ENCODE measurements at regions of chr20 and their contacts with region 1.

Region 1: GRCh38 chr20:36861875-36862801 is 13.8 kb upstream of the TLDC2 start:
- DNase-seq: no peak
- ATAC-seq: no peak
- H3K4me3 Mint-ChIP-seq: peak overlapping the region; percentile 78
- H3K27ac Mint-ChIP-seq: peak overlapping the region; percentile 35
- H3K4me1 Mint-ChIP-seq: peaks cover 76% of the 10 kb centered on the region
- H3K27me3 Mint-ChIP-seq: no peaks in the 10 kb centered on the region
- CTCF ChIP-seq: no peak

Region 2: GRCh38 chr20:36613974-36614373 is 248.2 kb before region 1 on chr20:
- CTCF ChIA-PET with region 1: interaction called, 6 read pairs
- POLR2A ChIA-PET with region 1: no interaction called
- intact Hi-C with region 1: loop called (anchors 2 kb)
- DNase-seq: no peak
- ATAC-seq: no peak
- H3K4me3 Mint-ChIP-seq: no peak overlapping the region
- H3K27ac Mint-ChIP-seq: no peak overlapping the region
- H3K4me1 Mint-ChIP-seq: no peaks in the 10 kb centered on the region
- H3K27me3 Mint-ChIP-seq: no peaks in the 10 kb centered on the region
- CTCF ChIP-seq: no peak

Region 3: DNA sequence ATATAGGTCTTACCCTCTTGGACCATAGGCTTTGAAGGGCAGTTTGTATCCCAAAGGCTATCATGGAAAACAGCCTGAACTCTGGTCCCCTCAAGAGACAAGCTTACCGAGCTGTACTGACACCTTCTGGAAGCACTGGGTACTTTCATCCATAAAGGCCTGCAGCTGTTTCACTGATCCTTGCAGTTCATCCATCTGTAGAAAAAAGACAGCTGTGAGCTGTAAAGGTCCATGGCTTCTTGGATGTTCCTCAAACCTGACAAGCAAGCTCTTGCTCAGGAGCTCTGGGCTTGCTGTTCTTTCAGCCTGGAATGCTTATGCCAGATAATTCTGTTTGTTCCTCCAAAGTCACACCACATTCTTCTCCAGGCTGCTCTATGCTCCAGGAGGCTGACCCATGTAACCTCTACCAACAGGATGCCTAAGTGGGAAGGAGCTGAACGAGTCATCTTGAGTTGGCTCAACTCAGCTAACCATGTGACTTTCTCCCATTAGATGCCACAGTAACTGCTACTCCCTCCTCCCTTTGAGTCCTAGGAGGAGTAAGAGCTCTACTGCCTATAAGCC is 107.4 kb before region 1 on chr20:
- CTCF ChIA-PET with region 1: interaction called, 13 read pairs
- POLR2A ChIA-PET with region 1: no interaction called
- intact Hi-C with region 1: no loop called
- DNase-seq: no peak
- ATAC-seq: peak; percentile 60
- H3K4me3 Mint-ChIP-seq: no peak overlapping the region
- H3K27ac Mint-ChIP-seq: peak overlapping the region; percentile 61
- H3K4me1 Mint-ChIP-seq: peaks cover 33% of the 10 kb centered on the region
- H3K27me3 Mint-ChIP-seq: no peaks in the 10 kb centered on the region
- CTCF ChIP-seq: no peak

Region 4: GRCh38 chr20:36792422-36792821 is 69.7 kb before region 1 on chr20:
- CTCF ChIA-PET with region 1: interaction called, 14 read pairs
- POLR2A ChIA-PET with region 1: no interaction called
- intact Hi-C with region 1: loop called (anchors 1 kb)
- DNase-seq: no peak
- ATAC-seq: peak; percentile 72
- H3K4me3 Mint-ChIP-seq: no peak overlapping the region
- H3K27ac Mint-ChIP-seq: no peak overlapping the region
- H3K4me1 Mint-ChIP-seq: peaks cover 11% of the 10 kb centered on the region
- H3K27me3 Mint-ChIP-seq: no peaks in the 10 kb centered on the region
- CTCF ChIP-seq: no peak

Region 5: GRCh38 chr20:36827474-36827873 is 34.7 kb before region 1 on chr20:
- CTCF ChIA-PET with region 1: interaction called, 3 read pairs
- POLR2A ChIA-PET with region 1: no interaction called
- intact Hi-C with region 1: loop called (anchors 5 kb)
- DNase-seq: no peak
- ATAC-seq: peak; percentile 40
- H3K4me3 Mint-ChIP-seq: no peak overlapping the region
- H3K27ac Mint-ChIP-seq: peak overlapping the region; percentile 68
- H3K4me1 Mint-ChIP-seq: peaks cover 15% of the 10 kb centered on the region
- H3K27me3 Mint-ChIP-seq: no peaks in the 10 kb centered on the region
- CTCF ChIP-seq: no peak

Region 6: DNA sequence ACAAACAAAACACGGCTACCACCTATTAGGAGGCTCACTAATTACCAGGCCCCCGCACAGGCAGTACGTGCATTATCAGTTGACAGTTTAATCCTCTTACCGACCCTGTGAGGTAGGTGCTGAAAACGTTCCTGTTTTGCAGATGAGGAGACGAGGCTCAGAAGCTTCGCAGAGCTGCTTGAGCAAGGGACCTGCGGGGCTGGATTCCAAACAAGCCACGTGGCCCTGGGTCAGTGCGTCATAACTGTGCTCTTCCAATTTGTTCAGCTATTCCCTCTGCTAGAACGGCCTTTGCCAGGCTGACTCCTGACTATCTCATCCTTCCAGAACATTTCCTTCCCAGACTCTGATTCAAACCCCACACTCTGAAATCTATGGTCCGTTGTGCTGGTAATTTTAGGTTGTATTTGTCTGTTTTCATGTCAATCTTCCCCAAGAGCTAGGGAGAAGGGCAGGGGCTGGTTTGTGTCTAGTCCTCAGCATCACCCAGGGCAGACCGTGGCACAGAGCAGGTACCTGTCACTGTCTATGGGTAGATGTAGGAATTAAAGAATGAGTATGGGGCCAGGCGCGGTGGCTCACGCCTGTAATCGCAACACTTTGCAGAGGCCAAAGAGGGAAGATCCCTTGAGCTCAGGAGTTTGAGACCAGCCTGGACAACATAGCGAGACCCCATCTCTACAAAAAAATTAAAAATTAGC is 15.0 kb before region 1 on chr20:
- CTCF ChIA-PET with region 1: interaction called, 24 read pairs
- POLR2A ChIA-PET with region 1: interaction called, 55 read pairs
- intact Hi-C with region 1: no loop called
- DNase-seq: no peak
- ATAC-seq: no peak
- H3K4me3 Mint-ChIP-seq: peak overlapping the region; percentile 74
- H3K27ac Mint-ChIP-seq: peak overlapping the region; percentile 95
- H3K4me1 Mint-ChIP-seq: peaks cover 91% of the 10 kb centered on the region
- H3K27me3 Mint-ChIP-seq: no peaks in the 10 kb centered on the region
- CTCF ChIP-seq: no peak

Region 7: DNA sequence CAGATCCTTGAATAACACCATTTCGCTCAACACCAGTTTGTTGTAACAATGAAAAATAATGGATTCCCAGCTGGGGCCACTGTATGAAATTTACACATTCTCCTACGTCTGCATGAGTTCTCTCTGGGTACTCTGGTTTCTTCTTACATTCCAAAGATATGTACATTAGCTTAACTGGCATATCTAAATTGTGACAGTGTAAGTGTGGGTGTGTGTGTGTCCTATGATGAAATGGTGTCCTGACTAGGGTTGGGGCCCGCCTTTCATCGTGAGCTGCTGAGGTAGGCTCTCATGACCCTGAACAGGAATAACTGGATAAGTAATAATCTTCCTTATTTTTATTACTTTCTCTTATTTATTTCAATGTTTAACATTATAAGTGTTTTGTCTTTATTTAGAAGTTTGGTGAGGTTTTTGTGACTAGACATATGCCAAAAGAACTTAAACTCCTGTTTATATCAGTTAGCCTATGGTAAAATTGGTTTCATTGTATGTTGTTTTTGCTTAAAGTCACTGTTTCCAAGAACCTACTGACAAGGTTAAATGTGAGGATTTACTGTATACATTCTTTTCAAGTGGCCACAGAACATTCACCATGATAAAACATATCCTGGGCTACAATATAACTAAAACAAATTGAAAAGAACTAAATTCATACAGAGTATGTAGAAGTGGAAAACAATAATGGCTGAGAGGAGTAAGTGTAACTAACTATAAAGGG is 191.3 kb after region 1 on chr20:
- CTCF ChIA-PET with region 1: no interaction called
- POLR2A ChIA-PET with region 1: no interaction called
- intact Hi-C with region 1: no loop called
- DNase-seq: no peak
- ATAC-seq: no peak
- H3K4me3 Mint-ChIP-seq: no peak overlapping the region
- H3K27ac Mint-ChIP-seq: no peak overlapping the region
- H3K4me1 Mint-ChIP-seq: no peaks in the 10 kb centered on the region
- H3K27me3 Mint-ChIP-seq: no peaks in the 10 kb centered on the region
- CTCF ChIP-seq: no peak